Activated naive CD4-positive, alpha-beta T cell treated with anti-CD3 and anti-CD28 coated beads, Interleukin-2, amount 10 ng/mL, durations not matched to agents 7 days and 5 days (primary cell): ENCODE measurements at regions of chr19 and their contacts with region 1.

Region 1: GRCh38 chr19:38634757-38635482 is 12.5 kb upstream of the ACTN4 start:
- DNase-seq: peak; percentile 83
- H3K4me3 Mint-ChIP-seq: no peak overlapping the region
- H3K27ac Mint-ChIP-seq: peak overlapping the region; percentile 74
- H3K4me1 Mint-ChIP-seq: peaks cover 45% of the 10 kb centered on the region
- H3K27me3 Mint-ChIP-seq: no peaks in the 10 kb centered on the region

Region 2: GRCh38 chr19:38544034-38544958 is 90.6 kb before region 1 on chr19:
- CTCF ChIA-PET with region 1: interaction called, 21 read pairs
- DNase-seq: peak; percentile 42
- H3K4me3 Mint-ChIP-seq: peak overlapping the region; percentile 16
- H3K27ac Mint-ChIP-seq: peak overlapping the region; percentile 77
- H3K4me1 Mint-ChIP-seq: peaks cover 37% of the 10 kb centered on the region
- H3K27me3 Mint-ChIP-seq: peaks cover 6% of the 10 kb centered on the region

Region 3: DNA sequence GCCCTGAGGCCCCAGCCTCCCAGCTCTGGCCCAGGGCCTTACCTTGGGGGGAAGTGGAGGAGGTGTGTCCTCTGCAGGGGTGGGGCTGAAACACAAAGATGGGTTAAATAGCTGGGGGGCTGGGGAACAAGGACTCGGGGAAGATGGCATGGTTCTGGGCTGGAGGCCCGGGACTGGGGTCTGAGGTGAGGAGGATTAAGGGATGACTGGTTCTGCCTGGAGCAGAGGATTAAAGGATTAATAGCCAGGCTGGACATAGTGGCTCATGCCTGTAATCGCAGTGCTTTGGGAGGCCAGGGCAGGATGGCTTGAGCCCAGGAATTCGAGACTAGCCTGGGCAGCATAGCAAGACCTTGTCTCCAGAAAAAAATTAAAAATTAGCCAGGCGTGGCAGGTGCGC is 28.8 kb before region 1 on chr19:
- CTCF ChIA-PET with region 1: no interaction called
- DNase-seq: no peak
- H3K4me3 Mint-ChIP-seq: no peak overlapping the region
- H3K27ac Mint-ChIP-seq: no peak overlapping the region
- H3K4me1 Mint-ChIP-seq: peaks cover 4% of the 10 kb centered on the region
- H3K27me3 Mint-ChIP-seq: no peaks in the 10 kb centered on the region

Region 4: GRCh38 chr19:38618590-38619360 is 16.1 kb before region 1 on chr19 and contains the start of gene EIF3K:
- CTCF ChIA-PET with region 1: interaction called, 16 read pairs
- DNase-seq: peak; percentile 98
- H3K4me3 Mint-ChIP-seq: peak within 1 kb of the TSS; percentile 99
- H3K27ac Mint-ChIP-seq: peak within 1 kb of the TSS; percentile 94
- H3K4me1 Mint-ChIP-seq: peaks cover 61% of the 10 kb centered on the region
- H3K27me3 Mint-ChIP-seq: no peaks in the 10 kb centered on the region

Region 5: GRCh38 chr19:38658462-38659306 is 23.8 kb after region 1 on chr19:
- CTCF ChIA-PET with region 1: no interaction called
- DNase-seq: no peak
- H3K4me3 Mint-ChIP-seq: no peak overlapping the region
- H3K27ac Mint-ChIP-seq: peak overlapping the region; percentile 13
- H3K4me1 Mint-ChIP-seq: peaks cover 84% of the 10 kb centered on the region
- H3K27me3 Mint-ChIP-seq: no peaks in the 10 kb centered on the region